Left lung (tissue), 14 donors: ENCODE measurements at regions of chr7 and their contacts with region 1.

Region 1: DNA sequence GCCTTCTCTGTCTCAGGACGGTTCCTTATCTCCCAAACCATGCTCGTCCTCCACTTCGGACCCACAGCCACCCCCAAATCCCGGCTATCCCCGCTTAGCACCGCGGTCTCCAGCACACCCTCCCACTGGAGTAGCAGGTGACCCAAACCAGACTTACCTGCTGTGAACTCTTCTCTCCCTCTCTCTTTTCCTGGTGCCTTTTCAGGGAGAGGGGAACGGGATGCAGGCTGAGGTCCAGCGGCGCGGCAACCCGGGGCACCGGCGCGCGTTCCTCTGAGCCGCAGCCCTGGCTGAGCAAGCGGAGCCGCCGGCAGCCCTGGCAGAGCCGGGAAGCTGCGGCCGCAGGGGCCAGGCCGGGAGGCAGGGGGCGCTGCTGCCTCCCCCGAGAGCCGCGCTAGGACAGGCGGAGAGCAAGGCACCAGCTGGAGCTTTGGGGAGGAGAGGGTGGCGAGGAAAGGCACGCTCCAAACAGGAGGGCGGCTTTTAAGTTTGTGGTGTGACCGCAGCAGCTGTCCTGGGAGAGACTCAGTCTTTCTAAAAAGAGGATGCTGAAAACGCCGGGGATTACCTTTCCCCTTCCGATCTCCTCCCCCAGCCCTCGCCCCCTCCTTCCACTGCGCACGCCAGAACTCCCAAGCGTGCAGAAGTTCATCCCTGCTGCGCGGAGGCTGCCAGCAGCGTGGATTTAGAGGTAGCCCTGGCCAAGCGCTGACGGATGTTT is at the start of gene SEMA3D:
- DNase-seq: peak; percentile 66 to 95 (median 88)
- ATAC-seq: peak; percentile 98
- H3K4me3 ChIP-seq: peak within 1 kb of the TSS; percentile 34 to 40
- H3K27ac ChIP-seq: peak within 1 kb of the TSS in 1 of 2 donors; percentile 78
- H3K4me1 ChIP-seq: peaks cover 0 to 20% of the 10 kb centered on the region in 2 donors
- H3K27me3 ChIP-seq: peaks cover 5 to 55% of the 10 kb centered on the region in 2 donors
- CTCF ChIP-seq: peak; percentile 64 to 69
- polyA plus RNA-seq, gene SEMA3D: 40.4 to 68.5 (median 52.7) TPM

Region 2: DNA sequence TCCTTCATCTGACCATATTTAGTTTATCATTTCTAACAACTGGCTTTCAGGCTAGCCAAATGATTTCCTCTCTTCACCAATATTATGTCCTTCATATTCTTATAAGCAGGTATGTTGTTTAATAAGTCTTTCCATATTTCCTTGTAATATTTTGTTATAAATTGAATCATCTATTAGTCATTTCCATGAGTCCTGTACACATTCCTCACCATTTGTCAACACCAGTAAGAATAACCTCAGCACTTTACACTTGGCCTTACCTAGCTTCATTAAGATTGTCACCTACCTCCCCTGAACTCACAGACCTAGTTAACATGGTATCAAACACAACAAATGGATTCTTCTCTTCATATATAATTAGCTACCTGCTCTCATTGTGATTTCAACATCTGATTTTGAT is 282.1 kb before region 1 on chr7:
- intact Hi-C with region 1: no loop called
- DNase-seq: no peak
- ATAC-seq: no peak
- H3K4me3 ChIP-seq: no peak overlapping the region
- H3K27ac ChIP-seq: no peak overlapping the region
- H3K4me1 ChIP-seq: no peaks in the 10 kb centered on the region
- H3K27me3 ChIP-seq: no peaks in the 10 kb centered on the region
- CTCF ChIP-seq: no peak

Region 3: GRCh38 chr7:85041605-85042216 is 145.0 kb before region 1 on chr7:
- intact Hi-C with region 1: loop called in 1 of 2 experiments (anchors 10 kb)
- DNase-seq: peak in 3 of 4 donors; percentile 39 to 65 (median 55)
- ATAC-seq: peak; percentile 92
- H3K4me3 ChIP-seq: no peak overlapping the region
- H3K27ac ChIP-seq: no peak overlapping the region
- H3K4me1 ChIP-seq: no peaks in the 10 kb centered on the region
- H3K27me3 ChIP-seq: no peaks in the 10 kb centered on the region
- CTCF ChIP-seq: peak; percentile 33 to 56

Region 4: GRCh38 chr7:85328456-85329090 is 141.9 kb after region 1 on chr7:
- intact Hi-C with region 1: no loop called
- DNase-seq: peak in 2 of 4 donors; percentile 21 to 25
- ATAC-seq: no peak
- H3K4me3 ChIP-seq: no peak overlapping the region
- H3K27ac ChIP-seq: no peak overlapping the region
- H3K4me1 ChIP-seq: no peaks in the 10 kb centered on the region
- H3K27me3 ChIP-seq: no peaks in the 10 kb centered on the region
- CTCF ChIP-seq: no peak